K562 (cell line): ENCODE measurements at regions of chr19 and their contacts with region 1.

Region 1: GRCh38 chr19:6737284-6738046 is at the start of gene GPR108:
- DNase-seq: peak; percentile 92 to 100 (median 96)
- ATAC-seq: peak; percentile 84
- H3K4me3 ChIP-seq: peak within 1 kb of the TSS; percentile 62
- H3K27ac ChIP-seq: peak within 1 kb of the TSS; percentile 91
- H3K4me1 ChIP-seq: peaks cover 46 to 70% of the 10 kb centered on the region in 2 experiments
- H3K27me3 ChIP-seq: no peaks in the 10 kb centered on the region
- CTCF ChIP-seq: peak in 1 of 3 experiments; percentile 5; a peak in 1 of 6 replicates
- EP300 ChIP-seq: no peak; the same call in none of the 2 replicates
- POLR2A ChIP-seq: no peak
- RAD21 ChIP-seq: no peak
- polyA plus RNA-seq, gene GPR108: 2.4 to 6.1 TPM

Region 2: DNA sequence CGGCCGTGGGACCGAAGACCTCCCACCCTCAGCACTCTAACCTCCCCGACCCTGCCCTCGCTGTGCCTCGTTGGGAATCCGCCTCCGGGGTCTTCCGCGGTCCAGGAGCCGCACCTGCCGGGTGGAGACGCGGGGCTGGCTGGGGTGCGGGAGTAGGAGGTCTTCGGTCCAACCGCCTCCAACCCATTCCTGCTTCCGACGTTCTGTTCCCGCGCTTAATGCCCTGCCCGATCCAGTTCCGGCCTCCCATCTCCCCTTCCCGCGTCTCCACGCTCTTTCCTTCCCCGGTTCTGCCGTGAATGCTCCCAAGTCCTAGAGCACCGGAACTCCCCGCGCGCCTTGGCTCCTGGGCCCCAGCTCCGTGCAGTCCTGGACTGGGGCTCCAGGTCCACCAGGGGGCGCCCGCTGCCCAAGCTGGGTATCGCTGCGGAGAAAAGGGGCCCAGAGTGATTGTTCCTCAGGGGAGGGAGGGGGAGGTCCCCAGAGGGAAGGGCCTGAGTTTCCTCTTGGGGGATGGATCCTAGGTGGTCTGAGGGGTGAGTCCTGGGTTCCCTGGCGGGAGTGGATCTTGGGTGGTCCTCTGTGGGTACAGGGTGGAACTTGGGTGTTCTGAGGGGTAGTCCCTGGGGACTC is 220.7 kb before region 1 on chr19:
- CTCF ChIA-PET with region 1: interaction called, 3 read pairs
- POLR2A ChIA-PET with region 1: interaction called, 4 read pairs
- in situ Hi-C with region 1: no loop called
- intact Hi-C with region 1: loop called (anchors 10 kb)
- DNase-seq: peak; percentile 86 to 94 (median 90)
- ATAC-seq: peak; percentile 95
- H3K4me3 ChIP-seq: peak overlapping the region; percentile 54
- H3K27ac ChIP-seq: peak overlapping the region; percentile 83
- H3K4me1 ChIP-seq: peaks cover 7 to 38% of the 10 kb centered on the region in 2 experiments; a peak in 4 of 5 replicates
- H3K27me3 ChIP-seq: no peaks in the 10 kb centered on the region
- CTCF ChIP-seq: peak; percentile 96 to 97 (median 96)
- EP300 ChIP-seq: no peak; the same call in 1 of the 2 replicates
- POLR2A ChIP-seq: peak; percentile 59; the same call in 1 of the 2 replicates
- RAD21 ChIP-seq: peak; percentile 97 to 98

Region 3: GRCh38 chr19:6632002-6632621 is 105.4 kb before region 1 on chr19:
- CTCF ChIA-PET with region 1: no interaction called
- POLR2A ChIA-PET with region 1: no interaction called
- in situ Hi-C with region 1: no loop called
- intact Hi-C with region 1: loop called (anchors 5 kb)
- DNase-seq: peak; percentile 52 to 85 (median 75)
- ATAC-seq: peak; percentile 80
- H3K4me3 ChIP-seq: no peak overlapping the region
- H3K27ac ChIP-seq: no peak overlapping the region
- H3K4me1 ChIP-seq: peaks cover 0 to 3% of the 10 kb centered on the region in 2 experiments; a peak in 1 of 5 replicates
- H3K27me3 ChIP-seq: no peaks in the 10 kb centered on the region
- CTCF ChIP-seq: peak; percentile 75 to 89 (median 81)
- EP300 ChIP-seq: no peak
- POLR2A ChIP-seq: no peak
- RAD21 ChIP-seq: peak; percentile 70 to 83

Region 4: GRCh38 chr19:6718741-6719539 is 18.5 kb before region 1 on chr19:
- CTCF ChIA-PET with region 1: no interaction called
- POLR2A ChIA-PET with region 1: interaction called, 5 read pairs
- in situ Hi-C with region 1: no loop called
- intact Hi-C with region 1: loop called (anchors 2 kb)
- DNase-seq: peak; percentile 93 to 99 (median 99)
- ATAC-seq: peak; percentile 89
- H3K4me3 ChIP-seq: peak overlapping the region; percentile 37; the same call in 1 of the 2 replicates
- H3K27ac ChIP-seq: no peak overlapping the region
- H3K4me1 ChIP-seq: peaks cover 38 to 39% of the 10 kb centered on the region in 2 experiments
- H3K27me3 ChIP-seq: no peaks in the 10 kb centered on the region
- CTCF ChIP-seq: no peak
- EP300 ChIP-seq: no peak
- POLR2A ChIP-seq: no peak
- RAD21 ChIP-seq: no peak

Region 5: DNA sequence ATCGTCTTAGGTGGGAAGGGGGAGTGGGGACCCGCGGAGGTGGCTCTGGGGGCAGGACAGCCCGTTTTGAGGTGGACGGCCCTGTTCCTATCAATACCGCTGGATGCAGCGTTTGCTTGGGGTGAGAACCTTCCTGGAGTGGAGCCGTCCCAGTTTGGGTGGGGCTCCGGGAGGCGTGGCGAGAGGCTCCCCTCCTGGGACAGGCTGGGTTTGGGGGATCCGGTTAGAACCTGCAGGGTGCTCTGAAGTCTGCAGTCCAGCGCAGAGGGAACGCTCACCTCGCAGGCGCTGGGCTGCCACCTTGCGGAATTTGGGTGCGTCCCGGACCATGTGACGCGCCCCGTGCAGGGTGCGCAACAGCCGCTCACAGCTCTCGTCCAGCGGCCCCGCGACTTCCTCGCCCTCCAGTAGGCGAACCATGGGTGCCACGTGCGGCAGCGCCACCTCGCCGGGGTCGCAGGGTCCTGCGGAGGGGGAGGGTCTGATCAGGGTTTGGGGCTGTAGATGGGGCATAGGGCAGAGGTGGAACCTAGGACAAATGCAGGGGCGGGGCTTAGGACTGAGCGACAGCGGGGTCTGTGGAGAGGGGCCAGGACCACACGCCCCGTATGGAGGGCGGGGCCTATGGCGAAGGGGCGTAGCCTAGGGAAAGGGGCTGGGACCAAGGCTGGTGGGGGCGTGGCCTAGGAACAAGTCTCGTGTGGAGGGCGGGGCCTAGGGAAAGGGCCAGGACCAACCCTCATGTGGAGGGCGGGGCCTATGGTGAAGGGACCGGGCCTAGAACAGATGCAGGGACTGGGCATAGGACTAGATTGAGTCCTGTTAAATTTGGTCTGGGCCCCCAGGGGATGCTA is 15.9 kb after region 1 on chr19:
- CTCF ChIA-PET with region 1: no interaction called
- POLR2A ChIA-PET with region 1: interaction called, 11 read pairs
- in situ Hi-C with region 1: no loop called
- intact Hi-C with region 1: loop called (anchors 1 kb)
- DNase-seq: peak; percentile 95 to 97 (median 96)
- ATAC-seq: peak; percentile 96
- H3K4me3 ChIP-seq: peak overlapping the region; percentile 36
- H3K27ac ChIP-seq: peak overlapping the region; percentile 77
- H3K4me1 ChIP-seq: peaks cover 0 to 35% of the 10 kb centered on the region in 2 experiments; a peak in 3 of 5 replicates
- H3K27me3 ChIP-seq: no peaks in the 10 kb centered on the region
- CTCF ChIP-seq: peak; percentile 58 to 80 (median 75)
- EP300 ChIP-seq: no peak
- POLR2A ChIP-seq: peak; percentile 67
- RAD21 ChIP-seq: peak; percentile 61 to 71

Region 6: DNA sequence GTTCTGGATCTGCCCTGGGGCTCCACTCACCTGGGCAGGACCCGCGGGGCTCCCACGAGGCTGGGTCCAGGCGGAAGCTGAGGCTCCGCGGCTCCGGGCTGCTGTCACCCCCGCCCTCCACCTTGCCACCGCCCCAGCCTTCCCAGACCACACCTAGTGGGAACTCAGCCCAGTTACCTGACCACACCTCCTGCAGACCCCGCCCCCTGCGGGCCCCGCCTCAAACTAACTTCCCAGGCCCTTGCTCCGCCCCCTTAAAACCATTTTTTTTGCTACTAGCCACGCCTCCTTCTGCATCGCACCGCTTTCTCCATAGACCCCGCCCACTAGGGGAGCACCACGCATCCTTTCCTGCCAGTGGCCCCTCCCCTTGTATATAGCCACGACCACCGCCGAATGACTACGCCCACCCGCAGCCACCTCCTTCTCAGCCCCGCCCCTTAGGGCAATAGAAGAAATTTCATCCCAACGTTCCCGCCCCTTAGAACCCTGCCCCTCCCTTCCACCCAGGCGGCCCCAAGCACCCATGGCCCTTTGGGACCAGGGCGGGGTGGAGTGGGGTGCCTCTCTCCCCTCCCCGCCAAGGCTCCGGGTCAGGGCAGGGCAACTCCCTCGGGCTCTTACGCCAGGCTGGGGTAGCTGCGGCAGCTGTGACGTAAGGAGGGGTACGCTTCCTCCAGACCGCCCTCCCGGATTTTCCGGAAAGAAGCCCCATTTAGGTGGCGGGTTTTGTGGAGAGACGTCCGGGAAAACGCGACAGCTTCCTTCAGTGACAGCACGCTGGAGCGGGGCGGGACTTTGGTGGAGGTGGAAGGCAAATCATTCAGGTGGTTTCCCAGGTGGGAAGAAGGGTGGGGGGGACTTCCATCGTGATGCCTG is 30.1 kb after region 1 on chr19 and contains the start of gene SH2D3A:
- CTCF ChIA-PET with region 1: no interaction called
- POLR2A ChIA-PET with region 1: interaction called, 3 read pairs
- in situ Hi-C with region 1: no loop called
- intact Hi-C with region 1: loop called (anchors 2 kb)
- DNase-seq: peak; percentile 95 to 97 (median 96)
- ATAC-seq: peak; percentile 95
- H3K4me3 ChIP-seq: peak within 1 kb of the TSS; percentile 64
- H3K27ac ChIP-seq: peak within 1 kb of the TSS; percentile 65
- H3K4me1 ChIP-seq: peaks cover 9 to 29% of the 10 kb centered on the region in 2 experiments
- H3K27me3 ChIP-seq: no peaks in the 10 kb centered on the region
- CTCF ChIP-seq: no peak
- EP300 ChIP-seq: no peak
- POLR2A ChIP-seq: peak; percentile 87; the same call in 1 of the 2 replicates
- RAD21 ChIP-seq: no peak
- polyA plus RNA-seq, gene SH2D3A: 0.75 to 0.83 TPM